Mammary epithelial cell (primary cell): ENCODE measurements at regions of chr15 and their contacts with region 1.

Region 1: GRCh38 chr15:27358751-27359434 is 387.9 kb downstream of the GABRG3 start:
- DNase-seq: no peak
- H3K4me3 ChIP-seq: no peak overlapping the region
- H3K27ac ChIP-seq: no peak overlapping the region
- H3K4me1 ChIP-seq: no peaks in the 10 kb centered on the region
- H3K27me3 ChIP-seq: no peaks in the 10 kb centered on the region
- CTCF ChIP-seq: peak; percentile 19 to 33

Region 2: GRCh38 chr15:27292641-27293040 is 66.3 kb before region 1 on chr15:
- CTCF ChIA-PET with region 1: no interaction called
- dilution Hi-C with region 1: no loop called
- in situ Hi-C with region 1: no loop called
- intact Hi-C with region 1: no loop called
- DNase-seq: no peak
- H3K4me3 ChIP-seq: no peak overlapping the region
- H3K27ac ChIP-seq: no peak overlapping the region
- H3K4me1 ChIP-seq: no peaks in the 10 kb centered on the region
- H3K27me3 ChIP-seq: no peaks in the 10 kb centered on the region
- CTCF ChIP-seq: no peak

Region 3: GRCh38 chr15:27317736-27318135 is 41.2 kb before region 1 on chr15:
- CTCF ChIA-PET with region 1: no interaction called
- dilution Hi-C with region 1: loop called (anchors 5 kb)
- in situ Hi-C with region 1: no loop called
- intact Hi-C with region 1: no loop called
- DNase-seq: no peak
- H3K4me3 ChIP-seq: no peak overlapping the region
- H3K27ac ChIP-seq: no peak overlapping the region
- H3K4me1 ChIP-seq: no peaks in the 10 kb centered on the region
- H3K27me3 ChIP-seq: no peaks in the 10 kb centered on the region
- CTCF ChIP-seq: no peak